GM12878 (cell line): ENCODE measurements at regions of chr2 and their contacts with region 1.

Region 1: DNA sequence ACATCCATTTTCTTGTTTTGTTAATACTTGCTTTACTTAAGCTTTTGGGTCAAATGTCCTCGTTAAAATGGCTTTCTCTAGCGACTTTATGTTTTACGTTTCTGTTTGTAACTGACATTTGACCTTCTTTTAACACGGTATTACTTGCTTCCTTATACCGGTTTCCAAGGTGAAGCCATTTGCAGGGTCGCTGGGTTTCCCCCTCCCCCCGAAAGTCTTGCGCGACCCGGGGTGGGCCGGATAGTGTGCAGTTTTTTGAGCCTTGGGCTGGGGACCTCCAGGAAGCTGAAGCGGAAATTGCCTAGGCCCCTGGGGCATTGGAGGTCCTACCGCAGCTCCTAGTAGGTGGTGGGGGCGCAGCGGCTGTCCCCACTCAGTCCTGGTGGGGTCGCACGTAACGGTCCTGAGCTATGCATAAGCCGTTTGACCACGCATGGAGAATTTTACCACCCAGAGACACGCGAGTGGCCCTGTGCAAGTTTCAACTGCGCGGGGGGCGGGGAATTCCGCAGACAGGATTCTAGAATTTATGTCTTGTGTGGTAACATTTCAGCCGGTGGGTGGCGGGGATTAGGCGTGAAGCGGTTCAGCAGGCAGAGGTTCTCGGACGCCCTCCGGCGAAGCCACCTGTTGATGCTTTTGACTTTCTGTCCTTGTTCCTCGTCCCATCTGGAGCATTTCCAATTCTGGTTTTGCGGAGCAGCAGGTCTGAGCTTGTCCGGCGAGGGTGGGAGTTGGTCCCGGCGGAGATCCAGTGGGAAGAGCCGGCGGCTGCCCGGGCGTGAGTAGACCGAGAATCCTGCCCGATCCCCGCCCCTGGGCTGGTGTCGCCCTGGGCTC is 2.4 kb downstream of the CFLAR start:
- DNase-seq: no peak
- ATAC-seq: peak; percentile 61
- H3K4me3 ChIP-seq: peak overlapping the region; percentile 82
- H3K27ac ChIP-seq: peak overlapping the region; percentile 99
- H3K4me1 ChIP-seq: peaks cover 16% of the 10 kb centered on the region
- H3K27me3 ChIP-seq: no peaks in the 10 kb centered on the region
- CTCF ChIP-seq: peak; percentile 37 to 65 (median 42)
- EP300 ChIP-seq: peak; percentile 88 to 89; a peak in 3 of 4 replicates
- POLR2A ChIP-seq: peak; percentile 83
- RAD21 ChIP-seq: peak; percentile 66

Region 2: DNA sequence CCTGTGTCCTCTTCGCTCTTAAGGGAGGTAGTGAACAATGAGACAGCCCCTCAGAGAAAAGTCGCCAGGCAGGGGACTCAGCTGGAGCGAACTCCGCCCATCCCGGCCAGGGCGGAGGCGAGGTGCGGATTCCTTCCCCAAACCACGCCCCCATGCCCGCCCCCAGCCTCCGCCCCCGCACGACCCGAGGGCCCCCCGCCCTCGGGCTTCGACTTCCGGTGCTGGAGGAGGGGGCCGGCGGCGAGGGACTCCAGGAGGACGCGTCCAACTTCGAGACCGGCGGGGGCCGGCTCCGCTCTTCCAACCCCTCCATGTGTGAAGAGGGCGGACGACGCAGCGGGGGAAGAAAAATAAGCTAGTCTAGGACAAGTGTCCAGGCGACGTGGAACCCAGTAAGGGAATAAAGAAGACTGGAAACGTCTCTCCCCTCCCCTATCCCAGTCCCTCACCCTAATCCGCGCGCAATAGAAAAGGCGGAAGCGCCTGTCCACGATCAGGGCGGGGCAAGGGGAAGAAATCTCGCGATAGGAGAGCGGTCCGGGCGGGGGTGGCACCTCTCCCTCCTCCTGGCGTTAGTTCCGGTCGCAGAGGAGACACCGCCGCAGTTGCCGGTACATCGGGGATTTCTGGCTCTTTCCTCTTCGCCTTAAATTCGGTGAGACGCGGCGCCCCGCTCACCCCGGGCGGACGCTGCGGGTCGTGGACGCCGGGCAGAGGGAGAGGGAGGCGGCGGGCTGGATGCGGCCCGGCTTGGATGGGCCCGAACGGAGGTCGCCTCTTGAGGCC is 306.8 kb before region 1 on chr2 and contains the start of gene BZW1:
- CTCF ChIA-PET with region 1: no interaction called
- POLR2A ChIA-PET with region 1: no interaction called
- RAD21 ChIA-PET with region 1: interaction called, 4 read pairs
- SMC1A ChIA-PET with region 1: no interaction called
- in situ Hi-C with region 1: no loop called
- intact Hi-C with region 1: loop called (anchors 2 kb)
- DNase-seq: peak; percentile 88
- ATAC-seq: peak; percentile 86
- H3K4me3 ChIP-seq: peak within 1 kb of the TSS; percentile 88
- H3K27ac ChIP-seq: peak within 1 kb of the TSS; percentile 100
- H3K4me1 ChIP-seq: peaks cover 19% of the 10 kb centered on the region
- H3K27me3 ChIP-seq: no peaks in the 10 kb centered on the region
- CTCF ChIP-seq: no peak
- EP300 ChIP-seq: 0 out of 4 replicates have a peak, but pooled peaks of 1 of the 2 experiments have one; percentile 5
- POLR2A ChIP-seq: peak; percentile 90
- RAD21 ChIP-seq: no peak
- polyA plus RNA-seq, gene BZW1: 200 to 317 TPM

Region 3: DNA sequence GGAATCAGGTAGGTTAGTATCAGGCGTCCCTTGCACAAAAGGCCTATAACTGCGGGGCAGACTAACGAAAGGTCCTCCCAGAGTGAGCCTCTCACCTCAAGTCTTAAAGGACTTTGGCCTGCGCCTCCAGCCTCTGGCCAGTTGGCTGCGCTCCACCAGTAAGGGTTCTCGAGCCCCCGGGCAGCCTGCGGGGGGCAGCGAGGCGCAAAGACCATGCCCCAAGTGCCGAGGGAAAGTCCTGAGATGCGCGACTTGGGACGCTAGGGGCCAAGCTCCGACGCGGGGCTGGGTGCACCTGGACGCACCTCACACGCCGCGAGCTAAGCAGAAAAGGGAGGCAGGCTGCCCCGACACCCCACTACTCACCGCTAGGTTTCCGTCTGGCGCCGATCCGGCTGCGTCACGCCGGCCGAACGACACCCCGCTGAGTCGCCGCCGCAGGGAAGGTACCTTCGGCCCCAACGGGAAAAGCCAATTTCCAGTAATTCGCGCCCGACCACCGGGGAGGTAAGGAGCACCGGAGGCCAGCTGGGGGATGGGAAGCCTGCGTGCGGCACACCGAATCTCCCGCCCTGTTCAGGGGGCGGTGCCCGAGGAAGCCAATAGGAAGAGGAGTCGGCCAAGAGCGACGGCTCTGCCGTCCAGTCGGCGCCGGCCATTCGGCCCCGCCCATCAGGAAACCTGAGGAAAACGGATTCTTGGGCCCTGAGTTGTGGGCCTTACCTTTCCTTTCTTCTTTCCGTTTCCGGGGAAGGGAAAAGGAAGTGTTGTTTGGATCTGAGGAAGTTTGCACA is 155.0 kb before region 1 on chr2 and contains the start of gene ORC2:
- CTCF ChIA-PET with region 1: interaction called, 6 read pairs
- POLR2A ChIA-PET with region 1: interaction called, 7 read pairs
- RAD21 ChIA-PET with region 1: interaction called, 10 read pairs
- SMC1A ChIA-PET with region 1: interaction called, 7 read pairs
- in situ Hi-C with region 1: no loop called
- intact Hi-C with region 1: loop called (anchors 5 kb)
- DNase-seq: peak; percentile 78
- ATAC-seq: peak; percentile 93
- H3K4me3 ChIP-seq: peak within 1 kb of the TSS; percentile 99
- H3K27ac ChIP-seq: peak within 1 kb of the TSS; percentile 67
- H3K4me1 ChIP-seq: peaks cover 7% of the 10 kb centered on the region; the same call in 1 of the 2 replicates
- H3K27me3 ChIP-seq: no peaks in the 10 kb centered on the region
- CTCF ChIP-seq: peak; percentile 58 to 73 (median 64)
- EP300 ChIP-seq: no peak
- POLR2A ChIP-seq: peak; percentile 94
- RAD21 ChIP-seq: peak; percentile 52
- polyA plus RNA-seq, gene ORC2: 6.1 to 6.7 TPM

Region 4: GRCh38 chr2:201149064-201149820 is 30.9 kb after region 1 on chr2:
- CTCF ChIA-PET with region 1: interaction called, 10 read pairs
- POLR2A ChIA-PET with region 1: interaction called, 9 read pairs
- RAD21 ChIA-PET with region 1: interaction called, 5 read pairs
- SMC1A ChIA-PET with region 1: interaction called, 11 read pairs
- in situ Hi-C with region 1: no loop called
- intact Hi-C with region 1: no loop called
- DNase-seq: no peak
- ATAC-seq: peak; percentile 5; the same call in 1 of the 3 replicates
- H3K4me3 ChIP-seq: no peak overlapping the region
- H3K27ac ChIP-seq: no peak overlapping the region
- H3K4me1 ChIP-seq: peaks cover 8% of the 10 kb centered on the region; the same call in 1 of the 2 replicates
- H3K27me3 ChIP-seq: no peaks in the 10 kb centered on the region
- CTCF ChIP-seq: no peak
- EP300 ChIP-seq: no peak
- POLR2A ChIP-seq: no peak
- RAD21 ChIP-seq: no peak

Region 5: GRCh38 chr2:201176081-201176481 is 57.7 kb after region 1 on chr2:
- CTCF ChIA-PET with region 1: interaction called, 17 read pairs
- POLR2A ChIA-PET with region 1: no interaction called
- RAD21 ChIA-PET with region 1: interaction called, 6 read pairs
- SMC1A ChIA-PET with region 1: interaction called, 11 read pairs
- in situ Hi-C with region 1: no loop called
- intact Hi-C with region 1: loop called (anchors 5 kb)
- DNase-seq: no peak
- ATAC-seq: no peak
- H3K4me3 ChIP-seq: no peak overlapping the region
- H3K27ac ChIP-seq: no peak overlapping the region
- H3K4me1 ChIP-seq: no peaks in the 10 kb centered on the region
- H3K27me3 ChIP-seq: no peaks in the 10 kb centered on the region
- CTCF ChIP-seq: no peak
- EP300 ChIP-seq: no peak
- POLR2A ChIP-seq: no peak
- RAD21 ChIP-seq: no peak

Region 6: DNA sequence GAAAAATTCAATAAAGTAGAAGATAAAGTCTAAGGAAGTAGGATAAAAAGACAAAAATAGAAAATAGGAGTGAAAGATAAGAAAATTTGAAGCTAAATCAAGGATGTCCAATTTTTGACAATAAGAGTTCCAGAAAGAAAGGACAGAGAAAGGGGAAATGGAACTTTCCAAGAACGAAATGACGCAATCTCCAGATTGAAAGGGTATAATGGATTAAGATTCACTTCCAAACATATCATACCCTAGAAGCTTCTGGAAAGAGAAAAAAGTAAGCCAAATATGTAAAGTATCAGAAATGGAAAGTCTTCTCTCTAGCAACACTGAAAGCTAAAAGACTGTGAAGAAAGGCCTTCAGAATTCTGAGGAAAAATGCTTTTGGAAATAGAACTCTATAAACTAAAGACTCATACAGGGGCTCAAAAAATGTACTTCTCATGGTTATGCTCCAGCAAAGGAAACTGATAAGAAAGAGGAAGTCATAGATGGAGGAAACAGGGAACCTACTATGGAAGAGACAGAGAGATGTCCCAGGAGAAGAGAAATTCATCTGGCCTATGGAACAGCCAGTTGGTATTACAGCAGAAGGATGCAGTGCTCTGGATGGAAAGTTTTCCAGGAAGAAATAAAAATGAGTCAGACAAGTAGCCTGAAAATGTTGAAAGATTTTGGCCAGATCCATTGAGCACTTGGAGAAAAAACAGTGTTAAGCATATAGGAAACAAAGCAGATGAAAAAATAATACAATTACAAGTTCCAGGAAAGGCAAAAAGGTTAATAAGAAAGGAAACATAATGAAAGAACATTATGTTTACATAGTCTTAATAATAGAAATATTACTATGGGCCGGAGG is 162.1 kb after region 1 on chr2:
- CTCF ChIA-PET with region 1: no interaction called
- POLR2A ChIA-PET with region 1: no interaction called
- RAD21 ChIA-PET with region 1: no interaction called
- SMC1A ChIA-PET with region 1: no interaction called
- in situ Hi-C with region 1: no loop called
- intact Hi-C with region 1: no loop called
- DNase-seq: no peak
- ATAC-seq: no peak
- H3K4me3 ChIP-seq: no peak overlapping the region
- H3K27ac ChIP-seq: no peak overlapping the region
- H3K4me1 ChIP-seq: no peaks in the 10 kb centered on the region
- H3K27me3 ChIP-seq: no peaks in the 10 kb centered on the region
- CTCF ChIP-seq: no peak
- EP300 ChIP-seq: no peak
- POLR2A ChIP-seq: no peak
- RAD21 ChIP-seq: no peak